ENCODE measurements at regions of chr7 and their contacts with region 1.

Region 1: GRCh38 chr7:137592232-137592896 is 248.8 kb upstream of the PTN start:
- DNase-seq: peak in 1 of 2 donors; percentile 79
- ATAC-seq: peak; percentile 78
- H3K4me3 ChIP-seq: no peak overlapping the region
- H3K27ac ChIP-seq: no peak overlapping the region
- H3K4me1 ChIP-seq: peaks cover 0 to 6% of the 10 kb centered on the region in 2 donors
- H3K27me3 ChIP-seq: no peaks in the 10 kb centered on the region

Region 2: DNA sequence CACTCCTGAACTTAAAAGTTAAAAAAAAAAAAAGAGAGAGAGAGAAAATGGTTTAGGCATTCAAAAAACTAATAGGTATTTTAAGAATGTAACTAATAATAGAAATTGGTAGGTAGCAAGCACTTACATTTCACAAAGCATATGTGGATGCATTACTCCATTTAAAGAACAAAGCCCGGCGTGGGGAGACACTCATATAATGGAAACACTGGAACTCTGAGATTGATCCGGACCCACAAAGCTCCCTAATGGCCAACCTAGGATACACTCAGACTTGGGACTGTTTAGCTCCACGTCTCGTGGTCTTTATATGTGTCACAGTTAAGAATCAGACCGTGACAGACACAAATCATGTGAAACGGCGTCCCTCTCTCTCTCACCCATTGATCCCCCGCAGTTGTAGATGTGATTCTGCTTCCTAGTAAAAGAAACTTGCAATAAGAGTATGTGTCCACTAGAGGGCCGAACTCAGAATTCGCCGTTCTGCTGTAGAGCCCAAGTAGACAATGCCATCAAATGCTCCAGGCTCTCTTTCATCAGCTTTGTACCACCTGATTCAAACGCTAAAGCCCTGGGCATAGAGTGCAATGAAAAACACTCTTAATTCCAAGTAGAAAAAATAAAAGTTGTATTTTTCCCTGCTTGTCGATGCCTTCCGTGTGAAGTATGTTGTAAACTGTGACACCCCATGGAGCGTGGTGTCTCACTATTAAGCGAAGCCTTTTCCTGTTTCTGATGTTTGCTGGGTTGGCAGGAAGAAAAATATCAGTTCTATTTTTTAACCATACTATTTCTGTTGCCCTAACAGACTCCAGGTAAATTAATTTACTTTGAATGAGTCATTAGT is 1186.2 kb before region 1 on chr7:
- intact Hi-C with region 1: loop called in 1 of 2 experiments (anchors 10 kb)
- DNase-seq: no peak
- ATAC-seq: peak; percentile 65
- H3K4me3 ChIP-seq: no peak overlapping the region
- H3K27ac ChIP-seq: no peak overlapping the region
- H3K4me1 ChIP-seq: no peaks in the 10 kb centered on the region
- H3K27me3 ChIP-seq: no peaks in the 10 kb centered on the region

Region 3: DNA sequence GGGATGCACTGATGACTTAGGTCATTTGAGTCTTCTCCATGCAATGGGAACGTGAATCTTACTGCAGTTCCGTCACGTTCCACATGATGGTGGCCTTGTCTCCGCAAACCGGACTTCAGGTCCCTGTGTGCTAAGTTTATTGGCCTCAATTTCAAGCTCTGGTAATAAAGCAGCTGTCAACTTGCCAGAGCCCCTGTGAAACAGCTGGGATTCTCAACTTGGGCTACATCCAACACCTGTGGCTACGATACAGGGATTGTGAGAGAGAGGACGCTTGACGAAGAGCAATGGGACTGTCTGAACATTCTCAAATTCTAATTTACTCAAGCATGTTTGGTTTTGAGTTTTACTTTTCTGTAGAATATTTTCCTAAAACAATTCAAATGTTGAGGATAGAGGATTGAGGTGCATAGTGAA is 423.1 kb before region 1 on chr7:
- intact Hi-C with region 1: loop called (anchors 2 to 10 kb)
- DNase-seq: no peak
- ATAC-seq: peak; percentile 67
- H3K4me3 ChIP-seq: no peak overlapping the region
- H3K27ac ChIP-seq: no peak overlapping the region
- H3K4me1 ChIP-seq: no peaks in the 10 kb centered on the region
- H3K27me3 ChIP-seq: no peaks in the 10 kb centered on the region

Region 4: GRCh38 chr7:137454246-137454724 is 138.1 kb before region 1 on chr7:
- intact Hi-C with region 1: loop called in 1 of 2 experiments (anchors 5 kb)
- DNase-seq: no peak
- ATAC-seq: peak; percentile 82
- H3K4me3 ChIP-seq: no peak overlapping the region
- H3K27ac ChIP-seq: no peak overlapping the region
- H3K4me1 ChIP-seq: no peaks in the 10 kb centered on the region
- H3K27me3 ChIP-seq: no peaks in the 10 kb centered on the region

Region 5: GRCh38 chr7:137462074-137462715 is 130.2 kb before region 1 on chr7:
- intact Hi-C with region 1: loop called (anchors 5 to 10 kb)
- DNase-seq: no peak
- ATAC-seq: no peak
- H3K4me3 ChIP-seq: no peak overlapping the region
- H3K27ac ChIP-seq: no peak overlapping the region
- H3K4me1 ChIP-seq: no peaks in the 10 kb centered on the region
- H3K27me3 ChIP-seq: no peaks in the 10 kb centered on the region